ENCODE measurements at regions of chrX and their contacts with region 1.

Region 1: GRCh38 chrX:49165901-49166881 is 3.6 kb downstream of the MAGIX start:
- DNase-seq: peak; percentile 53 to 84 (median 66)
- ATAC-seq: peak; percentile 60 to 77
- H3K4me3 Mint-ChIP-seq: peak overlapping the region; percentile 82 to 92 (median 86)
- H3K27ac Mint-ChIP-seq: peak overlapping the region; percentile 78 to 97 (median 94)
- H3K4me1 Mint-ChIP-seq: peaks cover 15 to 36% (median 31%) of the 10 kb centered on the region in 4 donors
- H3K27me3 Mint-ChIP-seq: no peaks in the 10 kb centered on the region

Region 2: DNA sequence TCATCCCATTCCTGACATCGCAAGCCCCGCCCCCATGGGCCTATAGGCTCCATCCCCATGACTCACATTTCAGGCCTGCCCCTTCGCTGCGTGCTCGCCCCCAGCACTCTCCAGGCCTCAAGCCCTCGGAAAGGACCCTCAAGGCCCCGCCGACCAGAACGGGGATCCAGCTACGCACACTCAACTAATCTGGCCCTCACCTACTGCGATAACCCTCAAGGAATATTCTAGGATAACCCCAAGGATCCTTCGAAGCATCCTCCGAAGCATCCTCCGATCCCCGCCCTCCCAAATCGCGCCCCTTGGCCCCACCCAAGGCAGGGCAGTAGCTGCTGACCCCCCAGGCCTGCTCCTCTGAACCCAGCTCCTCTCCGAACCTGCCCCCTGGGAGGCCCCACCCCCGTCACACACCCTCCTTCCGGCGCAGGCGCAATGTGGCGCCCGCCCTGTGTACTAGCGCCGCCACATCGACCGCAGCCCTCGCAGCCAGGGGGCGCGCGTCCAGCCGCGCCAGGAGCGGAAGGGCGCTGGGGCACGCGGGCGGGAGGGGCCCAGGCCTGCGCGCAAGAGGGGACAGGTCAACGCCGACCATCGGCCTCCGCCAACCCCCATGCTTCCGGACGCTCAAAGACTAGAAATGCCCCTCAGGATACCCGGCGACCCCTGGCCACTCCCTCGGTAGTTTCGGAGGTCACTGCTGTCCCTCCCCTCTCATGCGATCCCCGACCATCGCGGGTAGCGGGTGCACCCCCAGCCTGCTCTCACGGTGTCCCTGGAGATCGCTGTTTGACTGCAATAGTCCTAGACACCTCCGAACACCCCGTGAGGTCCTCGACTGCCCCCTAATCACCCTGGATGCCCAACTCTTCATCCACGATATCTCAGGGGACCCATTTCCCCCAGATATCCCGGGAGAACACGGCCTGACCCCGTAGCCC is 10.0 kb before region 1 on chrX:
- POLR2A ChIA-PET with region 1: interaction called, 21 read pairs
- DNase-seq: peak; percentile 76 to 93 (median 83)
- ATAC-seq: peak; percentile 93 to 95
- H3K4me3 Mint-ChIP-seq: peak overlapping the region; percentile 91 to 100 (median 96)
- H3K27ac Mint-ChIP-seq: peak overlapping the region; percentile 90 to 99 (median 97)
- H3K4me1 Mint-ChIP-seq: peaks cover 11 to 20% (median 15%) of the 10 kb centered on the region in 4 donors
- H3K27me3 Mint-ChIP-seq: no peaks in the 10 kb centered on the region